Colonic mucosa (tissue), 4 donors: ENCODE measurements at regions of chr5 and their contacts with region 1.

Region 1: DNA sequence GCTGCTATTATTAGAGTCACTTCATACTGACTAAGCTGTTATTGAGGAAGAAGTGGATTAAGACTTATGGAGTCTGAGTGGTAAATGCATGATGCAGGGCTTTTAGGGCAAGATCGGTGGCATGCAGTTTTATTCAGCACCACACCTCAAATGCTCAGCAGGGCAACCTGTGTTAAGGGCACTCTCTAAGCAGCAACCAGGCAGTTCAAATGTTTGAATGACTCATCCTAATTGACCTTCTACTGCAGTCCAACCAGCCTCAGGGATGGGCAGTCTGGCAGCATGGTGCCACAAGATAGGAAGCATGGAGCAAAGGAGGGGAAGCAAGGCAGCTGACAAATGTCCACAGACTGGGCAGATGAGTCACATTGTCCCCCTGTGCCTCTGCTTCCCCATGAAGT is 80.2 kb upstream of the MIER3 start:
- DNase-seq: peak; percentile 71
- H3K4me3 ChIP-seq: no peak overlapping the region
- H3K27ac ChIP-seq: peak overlapping the region; percentile 76
- H3K4me1 ChIP-seq: no peaks in the 10 kb centered on the region
- H3K27me3 ChIP-seq: no peaks in the 10 kb centered on the region
- CTCF ChIP-seq: no peak

Region 2: DNA sequence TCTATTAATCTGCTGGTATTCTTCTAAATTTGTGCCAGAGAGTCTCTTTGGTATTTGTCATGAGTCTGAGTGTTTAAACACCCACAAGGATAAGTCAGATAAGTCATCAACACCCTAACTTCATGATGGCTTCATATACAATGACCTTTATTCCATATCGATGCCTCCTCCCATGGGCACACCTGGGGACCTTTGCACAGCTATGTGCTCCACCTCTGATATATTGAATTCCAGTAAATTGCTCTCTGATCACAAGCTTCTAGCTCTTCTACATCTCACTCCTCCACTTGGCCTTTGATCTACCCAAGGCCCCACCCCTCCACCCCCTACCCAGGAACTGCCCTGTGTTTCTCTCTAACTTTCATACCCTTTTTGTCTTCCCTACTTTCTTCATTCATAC is 22.5 kb after region 1 on chr5:
- intact Hi-C with region 1: loop called (anchors 2 kb)
- DNase-seq: peak; percentile 64
- H3K4me3 ChIP-seq: no peak overlapping the region
- H3K27ac ChIP-seq: peak overlapping the region; percentile 69
- H3K4me1 ChIP-seq: no peaks in the 10 kb centered on the region
- H3K27me3 ChIP-seq: no peaks in the 10 kb centered on the region
- CTCF ChIP-seq: no peak